ENCODE measurements at regions of chr3 and their contacts with region 1.

Region 1: GRCh38 chr3:42190701-42191462 is 75.1 kb downstream of the CCK start:
- DNase-seq: peak; percentile 77 to 83
- H3K4me3 ChIP-seq: no peak overlapping the region
- H3K4me3 Mint-ChIP-seq: no peak overlapping the region
- H3K27ac Mint-ChIP-seq: peak overlapping the region; percentile 28
- H3K4me1 ChIP-seq: peaks cover 7% of the 10 kb centered on the region
- H3K4me1 Mint-ChIP-seq: no peaks in the 10 kb centered on the region
- H3K27me3 ChIP-seq: no peaks in the 10 kb centered on the region
- H3K27me3 Mint-ChIP-seq: no peaks in the 10 kb centered on the region
- CTCF ChIP-seq: peak; percentile 83 to 84

Region 2: GRCh38 chr3:41975421-41976103 is 215.3 kb before region 1 on chr3:
- CTCF ChIA-PET with region 1: no interaction called
- POLR2A ChIA-PET with region 1: no interaction called
- intact Hi-C with region 1: no loop called
- DNase-seq: no peak
- H3K4me3 ChIP-seq: no peak overlapping the region
- H3K4me3 Mint-ChIP-seq: no peak overlapping the region
- H3K27ac Mint-ChIP-seq: no peak overlapping the region
- H3K4me1 ChIP-seq: no peaks in the 10 kb centered on the region
- H3K4me1 Mint-ChIP-seq: no peaks in the 10 kb centered on the region
- H3K27me3 ChIP-seq: no peaks in the 10 kb centered on the region
- H3K27me3 Mint-ChIP-seq: no peaks in the 10 kb centered on the region
- CTCF ChIP-seq: no peak

Region 3: GRCh38 chr3:42118762-42119361 is 72.0 kb before region 1 on chr3:
- CTCF ChIA-PET with region 1: interaction called, 183 read pairs
- POLR2A ChIA-PET with region 1: interaction called, 3 read pairs
- intact Hi-C with region 1: loop called (anchors 1 kb)
- DNase-seq: peak; percentile 79
- H3K4me3 ChIP-seq: no peak overlapping the region
- H3K4me3 Mint-ChIP-seq: no peak overlapping the region
- H3K27ac Mint-ChIP-seq: peak overlapping the region; percentile 38
- H3K4me1 ChIP-seq: peaks cover 49% of the 10 kb centered on the region
- H3K4me1 Mint-ChIP-seq: peaks cover 41% of the 10 kb centered on the region
- H3K27me3 ChIP-seq: no peaks in the 10 kb centered on the region
- H3K27me3 Mint-ChIP-seq: no peaks in the 10 kb centered on the region
- CTCF ChIP-seq: peak; percentile 65 to 74

Region 4: DNA sequence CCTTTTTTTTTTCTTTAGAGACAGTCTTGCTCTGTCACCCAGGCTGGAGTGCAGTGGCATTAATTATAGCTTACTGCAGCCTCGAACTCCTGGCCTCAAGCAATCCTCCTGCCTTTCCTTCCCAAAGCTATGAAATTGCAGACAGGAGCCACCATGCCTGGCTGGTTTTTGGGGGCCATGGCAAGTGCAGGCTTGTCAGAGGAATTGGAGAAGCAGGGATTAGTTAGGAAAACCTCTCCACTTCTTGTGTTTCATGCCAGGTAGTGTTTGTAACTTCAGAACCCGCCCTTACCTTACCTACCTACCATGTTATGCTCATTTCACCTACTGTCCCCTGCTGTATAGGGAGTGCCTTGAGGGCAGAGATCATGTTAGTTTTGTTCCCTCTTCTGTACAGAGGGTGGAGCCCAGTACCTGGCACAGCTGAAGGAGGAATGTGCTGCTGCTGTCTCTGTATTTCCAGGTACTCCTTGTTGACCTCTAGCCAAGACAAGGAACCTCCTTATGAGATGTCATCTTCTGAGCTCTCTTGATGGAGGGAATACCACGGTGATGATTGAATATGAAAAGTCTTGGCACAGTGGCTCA is 55.9 kb before region 1 on chr3:
- CTCF ChIA-PET with region 1: interaction called, 32 read pairs
- POLR2A ChIA-PET with region 1: interaction called, 3 read pairs
- intact Hi-C with region 1: loop called (anchors 1 kb)
- DNase-seq: peak; percentile 32 to 71
- H3K4me3 ChIP-seq: no peak overlapping the region
- H3K4me3 Mint-ChIP-seq: peak overlapping the region; percentile 33
- H3K27ac Mint-ChIP-seq: peak overlapping the region; percentile 84
- H3K4me1 ChIP-seq: peaks cover 36% of the 10 kb centered on the region
- H3K4me1 Mint-ChIP-seq: peaks cover 42% of the 10 kb centered on the region
- H3K27me3 ChIP-seq: no peaks in the 10 kb centered on the region
- H3K27me3 Mint-ChIP-seq: no peaks in the 10 kb centered on the region
- CTCF ChIP-seq: no peak

Region 5: GRCh38 chr3:42159706-42160472 is 31.0 kb before region 1 on chr3:
- CTCF ChIA-PET with region 1: interaction called, 11 read pairs
- POLR2A ChIA-PET with region 1: interaction called, 3 read pairs
- intact Hi-C with region 1: loop called (anchors 2 kb)
- DNase-seq: peak; percentile 87 to 94
- H3K4me3 ChIP-seq: peak overlapping the region; percentile 42
- H3K4me3 Mint-ChIP-seq: peak overlapping the region; percentile 80
- H3K27ac Mint-ChIP-seq: peak overlapping the region; percentile 75
- H3K4me1 ChIP-seq: peaks cover 24% of the 10 kb centered on the region
- H3K4me1 Mint-ChIP-seq: peaks cover 17% of the 10 kb centered on the region
- H3K27me3 ChIP-seq: no peaks in the 10 kb centered on the region
- H3K27me3 Mint-ChIP-seq: no peaks in the 10 kb centered on the region
- CTCF ChIP-seq: no peak

Region 6: GRCh38 chr3:42205800-42206514 is 15.1 kb after region 1 on chr3:
- CTCF ChIA-PET with region 1: interaction called, 10 read pairs
- POLR2A ChIA-PET with region 1: interaction called, 6 read pairs
- intact Hi-C with region 1: no loop called
- DNase-seq: no peak
- H3K4me3 ChIP-seq: no peak overlapping the region
- H3K4me3 Mint-ChIP-seq: no peak overlapping the region
- H3K27ac Mint-ChIP-seq: peak overlapping the region; percentile 61
- H3K4me1 ChIP-seq: peaks cover 8% of the 10 kb centered on the region
- H3K4me1 Mint-ChIP-seq: no peaks in the 10 kb centered on the region
- H3K27me3 ChIP-seq: no peaks in the 10 kb centered on the region
- H3K27me3 Mint-ChIP-seq: no peaks in the 10 kb centered on the region
- CTCF ChIP-seq: no peak

Measured in Caco-2 (cell line).